ENCODE measurements at regions of chr5 and their contacts with region 1.

Region 1: DNA sequence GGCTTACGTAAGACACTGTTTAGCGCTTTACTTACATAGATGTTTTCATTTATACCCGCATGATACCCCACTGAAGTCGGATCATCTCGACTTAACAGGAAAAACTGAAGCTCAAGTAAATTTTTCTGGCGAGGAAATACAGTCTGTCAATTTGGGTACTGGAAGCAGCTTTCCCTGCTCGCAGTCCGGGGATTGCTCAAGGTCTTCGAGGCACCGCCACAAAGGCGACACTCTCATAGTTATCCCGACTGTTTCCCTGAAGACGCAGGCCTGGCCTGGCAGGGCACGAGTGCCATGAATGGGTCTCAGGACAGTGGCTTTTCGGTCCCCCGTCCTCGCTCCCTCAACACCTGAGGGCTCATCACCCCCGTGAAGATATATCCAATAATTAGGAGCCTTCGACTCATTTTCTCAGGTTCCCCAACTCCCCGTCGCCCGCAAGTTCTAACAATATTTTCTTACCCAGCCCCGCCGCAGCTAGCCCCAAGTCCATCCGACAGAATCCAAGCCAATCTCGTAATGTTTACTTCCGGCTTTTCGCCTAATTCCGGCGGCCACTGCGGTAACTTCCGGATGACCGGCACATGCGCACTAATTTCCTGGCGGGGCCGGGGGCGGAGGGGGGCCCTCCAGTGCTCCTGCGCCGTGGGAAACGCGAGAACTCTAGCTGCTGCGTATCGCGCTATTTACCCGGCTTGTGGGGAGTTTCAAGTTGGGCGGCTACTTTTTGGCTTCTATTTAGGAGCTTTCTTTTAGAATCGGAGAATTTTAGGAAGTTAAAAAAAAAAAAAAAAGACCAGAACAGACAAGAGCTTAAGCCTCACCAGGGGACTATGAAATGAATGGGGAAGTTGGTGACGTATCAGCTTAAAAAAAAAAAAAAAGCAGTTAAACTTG is at the start of gene SLU7:
- DNase-seq: peak; percentile 80 to 93 (median 91)
- ATAC-seq: peak; percentile 86
- H3K4me3 ChIP-seq: peak within 1 kb of the TSS; percentile 94
- H3K4me3 Mint-ChIP-seq: peak within 1 kb of the TSS; percentile 91 to 100 (median 96)
- H3K27ac ChIP-seq: peak within 1 kb of the TSS; percentile 98
- H3K27ac Mint-ChIP-seq: peak within 1 kb of the TSS; percentile 95 to 100 (median 98)
- H3K4me1 ChIP-seq: peaks cover 23 to 28% of the 10 kb centered on the region in 2 donors
- H3K4me1 Mint-ChIP-seq: peaks cover 45 to 85% (median 79%) of the 10 kb centered on the region in 7 donors
- H3K27me3 ChIP-seq: no peaks in the 10 kb centered on the region
- H3K27me3 Mint-ChIP-seq: no peaks in the 10 kb centered on the region
- total RNA-seq, gene SLU7: 53.0 to 85.3 (median 77.0) TPM

Region 2: DNA sequence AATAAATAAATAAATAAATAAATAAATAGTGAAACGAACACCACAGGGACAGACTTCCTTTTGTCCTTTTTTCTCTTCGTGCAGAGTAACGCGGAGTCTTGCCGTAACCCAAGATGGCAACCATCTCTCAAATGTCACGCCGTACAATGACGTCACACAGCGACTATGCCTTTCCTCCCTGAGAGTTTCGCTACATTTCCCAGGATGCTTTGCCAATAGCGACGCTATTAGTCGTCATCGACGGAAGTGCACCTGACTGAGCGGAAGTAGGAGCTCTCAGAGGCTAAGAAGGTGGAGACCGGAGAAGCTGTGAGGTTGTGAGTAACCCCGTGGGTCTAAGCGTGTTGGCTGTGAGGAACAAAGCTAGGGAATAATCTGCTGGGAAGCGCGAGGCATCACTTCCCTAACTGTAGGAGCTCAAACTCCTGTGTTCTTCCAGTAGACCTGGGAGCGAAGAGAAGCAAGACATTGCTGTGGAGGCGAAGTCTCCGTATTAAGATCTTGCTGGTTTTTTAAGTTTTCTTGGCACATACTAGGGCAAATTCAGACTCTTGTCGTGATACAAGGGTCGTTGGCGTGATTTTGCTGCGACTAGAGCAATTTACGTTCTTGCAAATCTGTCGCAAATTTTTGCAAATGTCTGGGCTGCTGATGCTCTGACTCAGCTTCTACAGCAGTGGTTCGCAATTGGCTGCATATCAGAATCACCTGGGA is 409.8 kb before region 1 on chr5 and contains the start of gene TTC1:
- CTCF ChIA-PET with region 1: interaction called, 3 read pairs
- POLR2A ChIA-PET with region 1: interaction called, 6 read pairs
- intact Hi-C with region 1: loop called (anchors 1 kb)
- DNase-seq: peak; percentile 71 to 96 (median 91)
- ATAC-seq: peak; percentile 99
- H3K4me3 ChIP-seq: peak within 1 kb of the TSS; percentile 84
- H3K4me3 Mint-ChIP-seq: peak within 1 kb of the TSS; percentile 93 to 99 (median 96)
- H3K27ac ChIP-seq: peak within 1 kb of the TSS; percentile 85
- H3K27ac Mint-ChIP-seq: peak within 1 kb of the TSS; percentile 91 to 99 (median 97)
- H3K4me1 ChIP-seq: peaks cover 9 to 13% of the 10 kb centered on the region in 2 donors
- H3K4me1 Mint-ChIP-seq: peaks cover 19 to 40% (median 31%) of the 10 kb centered on the region in 7 donors
- H3K27me3 ChIP-seq: no peaks in the 10 kb centered on the region
- H3K27me3 Mint-ChIP-seq: peaks cover 0 to 3% (median 0%) of the 10 kb centered on the region in 5 donors
- total RNA-seq, gene TTC1: 24.3 to 56.5 (median 41.7) TPM

Region 3: GRCh38 chr5:160399402-160400353 is 19.1 kb before region 1 on chr5 and contains the start of gene FAM200C:
- CTCF ChIA-PET with region 1: interaction called, 3 read pairs
- POLR2A ChIA-PET with region 1: interaction called, 8 read pairs
- intact Hi-C with region 1: loop called (anchors 1 kb)
- DNase-seq: peak; percentile 32 to 82 (median 40)
- ATAC-seq: peak; percentile 78
- H3K4me3 ChIP-seq: peak within 1 kb of the TSS; percentile 73
- H3K4me3 Mint-ChIP-seq: peak within 1 kb of the TSS; percentile 86 to 94 (median 92)
- H3K27ac ChIP-seq: peak within 1 kb of the TSS; percentile 67
- H3K27ac Mint-ChIP-seq: peak within 1 kb of the TSS; percentile 65 to 88 (median 82)
- H3K4me1 ChIP-seq: peaks cover 4 to 7% of the 10 kb centered on the region in 2 donors
- H3K4me1 Mint-ChIP-seq: peaks cover 8 to 23% (median 20%) of the 10 kb centered on the region in 7 donors
- H3K27me3 ChIP-seq: no peaks in the 10 kb centered on the region
- H3K27me3 Mint-ChIP-seq: no peaks in the 10 kb centered on the region
- total RNA-seq, gene FAM200C: 0.22 to 0.94 (median 0.78) TPM in 4 of 5 experiments, not detected in the other

Region 4: GRCh38 chr5:160467555-160468362 is 49.0 kb after region 1 on chr5:
- CTCF ChIA-PET with region 1: no interaction called
- POLR2A ChIA-PET with region 1: interaction called, 5 read pairs
- intact Hi-C with region 1: loop called in 1 of 2 experiments (anchors 1 kb)
- DNase-seq: peak; percentile 24 to 88 (median 48)
- ATAC-seq: peak; percentile 91
- H3K4me3 ChIP-seq: peak overlapping the region; percentile 69
- H3K4me3 Mint-ChIP-seq: peak overlapping the region; percentile 80 to 100 (median 88)
- H3K27ac ChIP-seq: peak overlapping the region; percentile 48
- H3K27ac Mint-ChIP-seq: peak overlapping the region; percentile 73 to 99 (median 81)
- H3K4me1 ChIP-seq: peaks cover 28 to 34% of the 10 kb centered on the region in 2 donors
- H3K4me1 Mint-ChIP-seq: peaks cover 36 to 79% (median 70%) of the 10 kb centered on the region in 7 donors
- H3K27me3 ChIP-seq: no peaks in the 10 kb centered on the region
- H3K27me3 Mint-ChIP-seq: no peaks in the 10 kb centered on the region